T-cell (primary cell): ENCODE measurements at regions of chr19 and their contacts with region 1.

Region 1: GRCh38 chr19:47523473-47523872 is 8.6 kb upstream of the NAPA start:
- DNase-seq: no peak
- ATAC-seq: no peak
- H3K4me3 ChIP-seq: no peak overlapping the region
- H3K4me3 Mint-ChIP-seq: no peak overlapping the region
- H3K27ac ChIP-seq: no peak overlapping the region
- H3K27ac Mint-ChIP-seq: no peak overlapping the region
- H3K4me1 ChIP-seq: peaks cover 9 to 22% of the 10 kb centered on the region in 2 experiments
- H3K4me1 Mint-ChIP-seq: peaks cover 17 to 26% (median 19%) of the 10 kb centered on the region in 3 donors
- H3K27me3 ChIP-seq: peaks cover 0 to 27% of the 10 kb centered on the region in 2 experiments
- H3K27me3 Mint-ChIP-seq: peaks cover 5 to 11% of the 10 kb centered on the region in 2 donors

Region 2: GRCh38 chr19:47540728-47541127 is 17.3 kb after region 1 on chr19:
- CTCF ChIA-PET with region 1: no interaction called
- POLR2A ChIA-PET with region 1: no interaction called
- DNase-seq: peak in 1 of 35 experiments; percentile 46
- ATAC-seq: no peak
- H3K4me3 ChIP-seq: no peak overlapping the region
- H3K4me3 Mint-ChIP-seq: no peak overlapping the region
- H3K27ac ChIP-seq: peak overlapping the region; percentile 67
- H3K27ac Mint-ChIP-seq: peak overlapping the region in 1 of 2 donors; percentile 2
- H3K4me1 ChIP-seq: peaks cover 2 to 49% of the 10 kb centered on the region in 2 experiments
- H3K4me1 Mint-ChIP-seq: peaks cover 17 to 28% (median 19%) of the 10 kb centered on the region in 3 donors
- H3K27me3 ChIP-seq: peaks cover 0 to 32% of the 10 kb centered on the region in 2 experiments
- H3K27me3 Mint-ChIP-seq: peaks cover 0 to 6% of the 10 kb centered on the region in 2 donors

Region 3: DNA sequence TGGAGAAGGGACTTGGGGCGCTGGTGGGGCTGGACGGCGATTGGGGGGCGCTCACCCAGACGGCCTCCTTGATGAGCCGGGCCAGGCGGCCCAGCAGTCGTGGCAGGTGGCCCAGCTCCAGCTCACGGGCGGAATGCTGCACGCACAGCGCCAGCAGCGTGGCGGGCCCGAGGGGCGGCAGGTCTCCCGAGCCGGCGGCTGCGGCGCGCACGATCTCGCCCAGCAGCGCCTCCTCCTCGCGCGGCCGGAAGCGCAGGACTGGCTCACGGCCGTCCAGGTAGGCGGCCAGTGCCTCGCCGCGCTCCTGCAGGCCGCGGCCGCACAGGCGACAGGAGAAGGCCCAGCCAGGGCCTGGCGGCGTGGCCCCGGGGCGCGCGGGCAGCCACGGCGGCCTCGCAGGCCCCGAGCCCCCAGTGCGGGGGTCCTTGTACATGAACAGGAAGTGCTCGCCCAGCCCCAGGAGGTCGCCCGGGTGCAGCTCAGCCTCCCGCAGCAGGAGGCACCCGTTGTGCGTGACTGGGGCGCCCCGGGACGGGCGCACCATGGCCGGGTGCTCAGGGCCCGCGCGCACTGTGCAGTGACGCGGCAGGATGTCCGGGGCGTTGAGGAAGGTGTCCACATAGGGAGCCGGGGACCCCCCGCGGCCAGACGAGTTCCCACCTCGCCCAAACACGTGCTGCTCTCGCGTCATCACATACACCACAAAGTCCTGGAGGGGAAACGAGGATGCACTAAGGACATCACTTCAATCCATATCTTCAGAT is 1205.6 kb after region 1 on chr19:
- CTCF ChIA-PET with region 1: no interaction called
- POLR2A ChIA-PET with region 1: interaction called in 1 of 2 experiments, 10 read pairs
- DNase-seq: no peak
- ATAC-seq: no peak
- H3K4me3 ChIP-seq: no peak overlapping the region
- H3K4me3 Mint-ChIP-seq: no peak overlapping the region
- H3K27ac ChIP-seq: no peak overlapping the region
- H3K27ac Mint-ChIP-seq: no peak overlapping the region
- H3K4me1 ChIP-seq: peaks cover 11 to 27% of the 10 kb centered on the region in 2 experiments
- H3K4me1 Mint-ChIP-seq: peaks cover 22 to 25% (median 23%) of the 10 kb centered on the region in 3 donors
- H3K27me3 ChIP-seq: no peaks in the 10 kb centered on the region
- H3K27me3 Mint-ChIP-seq: peaks cover 0 to 5% of the 10 kb centered on the region in 2 donors